Pancreas (tissue), 10 donors: ENCODE measurements at regions of chr17 and their contacts with region 1.

Region 1: DNA sequence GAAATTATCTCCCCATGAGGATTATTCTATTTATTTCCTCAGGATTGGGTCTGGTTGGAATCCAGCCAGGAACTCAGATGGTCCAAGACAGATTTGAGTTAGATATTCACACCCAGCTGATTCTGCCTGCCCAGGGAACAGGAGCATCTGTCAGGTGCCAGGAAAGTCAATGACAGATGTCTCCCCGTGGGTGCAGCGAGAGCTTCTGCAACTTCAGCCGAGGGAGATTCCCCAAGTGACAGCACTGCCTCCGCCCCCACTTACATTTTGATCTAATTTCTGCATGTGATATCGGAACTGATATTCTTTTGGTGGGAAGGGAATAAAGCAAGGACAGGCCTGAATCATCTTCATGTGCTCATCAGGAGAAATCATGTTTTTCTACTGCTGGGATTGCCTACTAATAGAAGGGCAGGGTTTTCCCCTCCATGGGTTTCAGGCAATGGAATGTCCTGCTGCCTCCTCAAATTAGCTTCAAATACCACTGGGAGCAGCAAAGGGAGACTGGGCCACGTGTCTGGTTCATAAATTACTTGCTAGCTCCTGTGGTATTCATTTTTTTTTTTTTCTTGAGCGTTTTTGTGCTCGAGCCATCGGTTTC is 15.7 kb upstream of the DHX8 start:
- DNase-seq: no peak
- ATAC-seq: peak in 2 of 4 donors; percentile 45 to 47
- H3K4me3 ChIP-seq: no peak overlapping the region
- H3K27ac ChIP-seq: no peak overlapping the region
- H3K4me1 ChIP-seq: no peaks in the 10 kb centered on the region
- H3K27me3 ChIP-seq: no peaks in the 10 kb centered on the region
- CTCF ChIP-seq: no peak

Region 2: DNA sequence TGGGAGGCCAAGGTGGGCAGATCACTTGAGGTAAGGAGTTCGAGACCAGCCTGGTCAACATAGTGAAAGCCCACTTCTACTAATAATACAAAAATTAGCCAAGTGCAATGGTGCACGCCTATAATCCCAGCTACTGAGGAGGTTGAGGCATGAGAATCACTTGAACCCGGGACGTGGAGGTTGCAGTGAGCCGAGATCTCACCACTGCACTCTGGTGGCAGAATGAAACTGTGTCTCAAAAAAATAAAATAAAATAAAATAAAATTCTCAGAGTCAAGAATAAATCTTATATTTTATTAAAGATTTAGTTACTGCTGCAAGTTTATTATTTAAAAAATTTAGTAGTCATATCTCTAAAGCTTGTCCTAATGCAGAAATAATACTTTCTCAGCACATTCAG is 39.6 kb before region 1 on chr17:
- intact Hi-C with region 1: loop called in 1 of 3 experiments (anchors 5 kb)
- DNase-seq: no peak
- ATAC-seq: no peak
- H3K4me3 ChIP-seq: no peak overlapping the region
- H3K27ac ChIP-seq: no peak overlapping the region
- H3K4me1 ChIP-seq: no peaks in the 10 kb centered on the region
- H3K27me3 ChIP-seq: no peaks in the 10 kb centered on the region
- CTCF ChIP-seq: no peak